IMR-90 (cell line): ENCODE measurements at regions of chr10 and their contacts with region 1.

Region 1: GRCh38 chr10:24724381-24725228 is 918 bp upstream of the ARHGAP21 start:
- DNase-seq: peak; percentile 96
- ATAC-seq: peak; percentile 80
- H3K4me3 ChIP-seq: peak overlapping the region; percentile 72
- H3K27ac ChIP-seq: peak overlapping the region; percentile 78
- H3K4me1 ChIP-seq: no peaks in the 10 kb centered on the region
- H3K27me3 ChIP-seq: no peaks in the 10 kb centered on the region
- CTCF ChIP-seq: no peak
- POLR2A ChIP-seq: peak; percentile 76; the same call in 1 of the 2 replicates
- RAD21 ChIP-seq: 0 out of 2 replicates have a peak, but pooled peaks have one; percentile 7

Region 2: GRCh38 chr10:24406809-24407483 is 317.7 kb before region 1 on chr10:
- CTCF ChIA-PET with region 1: no interaction called
- POLR2A ChIA-PET with region 1: no interaction called
- dilution Hi-C with region 1: no loop called
- in situ Hi-C with region 1: no loop called
- intact Hi-C with region 1: no loop called
- DNase-seq: no peak
- ATAC-seq: no peak
- H3K4me3 ChIP-seq: no peak overlapping the region
- H3K27ac ChIP-seq: no peak overlapping the region
- H3K4me1 ChIP-seq: no peaks in the 10 kb centered on the region
- H3K27me3 ChIP-seq: peaks cover 2% of the 10 kb centered on the region; the same call in 1 of the 2 replicates
- CTCF ChIP-seq: no peak
- POLR2A ChIP-seq: no peak
- RAD21 ChIP-seq: no peak

Region 3: DNA sequence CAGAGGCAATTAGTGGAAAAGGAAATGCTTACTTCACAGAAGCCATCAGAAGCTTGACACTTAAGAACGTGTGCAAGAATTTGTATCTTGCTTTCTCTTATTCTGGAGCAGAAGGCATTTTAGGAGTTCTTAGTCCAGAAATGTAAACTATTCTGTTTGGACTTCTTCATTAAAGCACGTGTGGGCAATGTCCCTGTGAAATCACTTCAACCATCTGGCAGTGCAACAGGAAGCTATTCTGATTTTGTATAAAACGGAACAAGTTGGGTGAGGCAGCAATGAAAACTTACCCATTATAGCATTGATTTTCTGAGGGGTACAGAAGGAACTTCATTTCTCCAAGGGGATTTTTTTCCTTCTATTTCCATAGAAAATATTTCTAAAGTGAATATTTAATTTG is 20.3 kb after region 1 on chr10:
- CTCF ChIA-PET with region 1: no interaction called
- POLR2A ChIA-PET with region 1: no interaction called
- dilution Hi-C with region 1: no loop called
- in situ Hi-C with region 1: no loop called
- intact Hi-C with region 1: loop called (anchors 2 kb)
- DNase-seq: peak; percentile 16
- ATAC-seq: peak; percentile 46; the same call in 1 of the 2 replicates
- H3K4me3 ChIP-seq: no peak overlapping the region
- H3K27ac ChIP-seq: no peak overlapping the region
- H3K4me1 ChIP-seq: peaks cover 2% of the 10 kb centered on the region; the same call in 1 of the 2 replicates
- H3K27me3 ChIP-seq: no peaks in the 10 kb centered on the region
- CTCF ChIP-seq: no peak
- POLR2A ChIP-seq: no peak
- RAD21 ChIP-seq: no peak

Region 4: GRCh38 chr10:24894309-24894708 is 169.7 kb after region 1 on chr10:
- CTCF ChIA-PET with region 1: interaction called, 3 read pairs
- POLR2A ChIA-PET with region 1: no interaction called
- dilution Hi-C with region 1: no loop called
- in situ Hi-C with region 1: no loop called
- intact Hi-C with region 1: loop called (anchors 1 kb)
- DNase-seq: peak; percentile 97
- ATAC-seq: peak; percentile 88
- H3K4me3 ChIP-seq: no peak overlapping the region
- H3K27ac ChIP-seq: peak overlapping the region; percentile 16; the same call in 1 of the 2 replicates
- H3K4me1 ChIP-seq: peaks cover 14% of the 10 kb centered on the region
- H3K27me3 ChIP-seq: no peaks in the 10 kb centered on the region
- CTCF ChIP-seq: no peak
- POLR2A ChIP-seq: no peak
- RAD21 ChIP-seq: no peak; the same call in 1 of the 2 replicates

Region 5: GRCh38 chr10:24958091-24958720 is 233.6 kb after region 1 on chr10:
- CTCF ChIA-PET with region 1: no interaction called
- POLR2A ChIA-PET with region 1: no interaction called
- dilution Hi-C with region 1: no loop called
- in situ Hi-C with region 1: loop called (anchors 25 kb)
- intact Hi-C with region 1: loop called (anchors 2 kb)
- DNase-seq: peak; percentile 95
- ATAC-seq: peak; percentile 67
- H3K4me3 ChIP-seq: no peak overlapping the region
- H3K27ac ChIP-seq: peak overlapping the region; percentile 71; the same call in 1 of the 2 replicates
- H3K4me1 ChIP-seq: peaks cover 22% of the 10 kb centered on the region
- H3K27me3 ChIP-seq: no peaks in the 10 kb centered on the region
- CTCF ChIP-seq: no peak
- POLR2A ChIP-seq: no peak
- RAD21 ChIP-seq: no peak; the same call in 1 of the 2 replicates

Region 6: DNA sequence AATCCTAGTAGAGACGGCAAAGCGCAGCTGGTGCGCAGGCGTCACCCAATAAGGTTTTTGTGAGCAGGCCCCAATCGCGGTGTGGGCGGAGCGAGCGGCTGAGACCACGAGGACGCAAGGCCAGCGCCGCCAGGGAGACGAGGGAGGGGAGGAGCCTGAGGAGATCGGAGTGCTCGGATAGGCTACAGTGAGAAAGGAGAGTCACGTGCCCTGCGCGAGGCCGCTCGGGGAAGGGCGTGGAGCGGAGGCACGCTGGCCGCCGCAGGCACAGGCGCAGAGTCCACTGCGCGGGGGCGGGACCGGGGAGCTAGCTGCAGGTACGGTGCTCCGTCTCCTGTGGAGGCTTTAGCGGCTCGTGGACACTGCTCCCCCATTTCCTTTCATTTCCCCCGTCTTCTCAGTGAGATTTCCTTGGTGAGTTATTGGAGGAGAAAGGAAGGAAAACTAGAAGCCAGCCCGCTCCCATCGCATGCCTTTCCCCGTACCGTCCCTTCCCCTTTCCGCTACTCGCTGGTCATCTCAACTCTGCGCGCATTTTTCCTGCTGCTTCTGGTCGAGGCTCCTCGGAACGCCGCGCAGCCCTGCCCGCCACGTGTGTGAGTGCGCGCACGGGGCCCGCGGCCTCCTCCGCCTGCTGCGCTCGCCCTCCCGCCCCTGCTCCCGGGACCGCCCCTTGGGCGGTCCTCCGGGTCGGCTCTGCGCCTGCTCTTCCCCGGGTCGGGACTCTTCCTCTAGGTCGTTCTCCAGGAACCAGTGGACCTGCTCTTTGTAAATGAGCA is 292.0 kb after region 1 on chr10 and contains the start of gene THNSL1:
- CTCF ChIA-PET with region 1: no interaction called
- POLR2A ChIA-PET with region 1: no interaction called
- dilution Hi-C with region 1: no loop called
- in situ Hi-C with region 1: no loop called
- intact Hi-C with region 1: loop called (anchors 1 kb)
- DNase-seq: peak; percentile 99
- ATAC-seq: peak; percentile 99
- H3K4me3 ChIP-seq: peak within 1 kb of the TSS; percentile 79
- H3K27ac ChIP-seq: peak within 1 kb of the TSS; percentile 77
- H3K4me1 ChIP-seq: peaks cover 1% of the 10 kb centered on the region; the same call in 1 of the 2 replicates
- H3K27me3 ChIP-seq: no peaks in the 10 kb centered on the region
- CTCF ChIP-seq: no peak
- POLR2A ChIP-seq: peak; percentile 84
- RAD21 ChIP-seq: no peak
- total RNA-seq, gene THNSL1: 2.0 and 3.6 TPM in 2 replicates